ENCODE measurements at regions of chr12 and their contacts with region 1.

Region 1: DNA sequence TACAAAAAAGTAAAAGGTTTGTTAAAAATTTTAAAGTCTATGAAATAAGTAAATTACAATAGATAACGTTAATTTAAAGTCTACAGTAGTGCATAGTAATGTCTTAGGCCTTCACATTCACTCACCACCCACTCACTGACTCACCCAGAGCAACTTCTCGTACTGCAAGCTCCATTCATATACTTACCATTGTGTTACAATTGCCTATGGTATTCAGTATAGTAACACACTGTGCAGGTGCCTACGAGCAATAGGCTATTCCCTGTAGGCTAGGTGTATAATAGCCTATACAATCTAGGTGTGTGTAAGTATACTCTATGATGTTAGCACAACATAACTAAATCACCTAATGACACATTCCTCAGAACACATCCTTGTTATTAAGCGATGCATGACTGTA is 435.3 kb upstream of the TMTC1 start:
- DNase-seq: no peak
- H3K4me3 ChIP-seq: no peak overlapping the region
- H3K27ac ChIP-seq: no peak overlapping the region
- H3K4me1 ChIP-seq: no peaks in the 10 kb centered on the region
- H3K27me3 ChIP-seq: no peaks in the 10 kb centered on the region
- CTCF ChIP-seq: no peak
- POLR2A ChIP-seq: no peak

Region 2: GRCh38 chr12:30197392-30198047 is 21.5 kb before region 1 on chr12:
- intact Hi-C with region 1: no loop called
- DNase-seq: no peak
- H3K4me3 ChIP-seq: no peak overlapping the region
- H3K27ac ChIP-seq: no peak overlapping the region
- H3K4me1 ChIP-seq: no peaks in the 10 kb centered on the region
- H3K27me3 ChIP-seq: peaks cover 0 to 10% of the 10 kb centered on the region in 2 donors
- CTCF ChIP-seq: no peak
- POLR2A ChIP-seq: no peak

Region 3: GRCh38 chr12:30257618-30258017 is 38.6 kb after region 1 on chr12:
- intact Hi-C with region 1: no loop called
- DNase-seq: no peak
- H3K4me3 ChIP-seq: no peak overlapping the region
- H3K27ac ChIP-seq: no peak overlapping the region
- H3K4me1 ChIP-seq: no peaks in the 10 kb centered on the region
- H3K27me3 ChIP-seq: no peaks in the 10 kb centered on the region
- CTCF ChIP-seq: no peak
- POLR2A ChIP-seq: no peak

Region 4: GRCh38 chr12:30700216-30700900 is 481.3 kb after region 1 on chr12:
- intact Hi-C with region 1: loop called (anchors 5 kb)
- DNase-seq: no peak
- H3K4me3 ChIP-seq: no peak overlapping the region
- H3K27ac ChIP-seq: no peak overlapping the region
- H3K4me1 ChIP-seq: no peaks in the 10 kb centered on the region
- H3K27me3 ChIP-seq: no peaks in the 10 kb centered on the region
- CTCF ChIP-seq: no peak
- POLR2A ChIP-seq: no peak

Measured in breast epithelium (tissue), 4 donors.